Natural killer cell (primary cell): ENCODE measurements at regions of chr1 and their contacts with region 1.

Region 1: DNA sequence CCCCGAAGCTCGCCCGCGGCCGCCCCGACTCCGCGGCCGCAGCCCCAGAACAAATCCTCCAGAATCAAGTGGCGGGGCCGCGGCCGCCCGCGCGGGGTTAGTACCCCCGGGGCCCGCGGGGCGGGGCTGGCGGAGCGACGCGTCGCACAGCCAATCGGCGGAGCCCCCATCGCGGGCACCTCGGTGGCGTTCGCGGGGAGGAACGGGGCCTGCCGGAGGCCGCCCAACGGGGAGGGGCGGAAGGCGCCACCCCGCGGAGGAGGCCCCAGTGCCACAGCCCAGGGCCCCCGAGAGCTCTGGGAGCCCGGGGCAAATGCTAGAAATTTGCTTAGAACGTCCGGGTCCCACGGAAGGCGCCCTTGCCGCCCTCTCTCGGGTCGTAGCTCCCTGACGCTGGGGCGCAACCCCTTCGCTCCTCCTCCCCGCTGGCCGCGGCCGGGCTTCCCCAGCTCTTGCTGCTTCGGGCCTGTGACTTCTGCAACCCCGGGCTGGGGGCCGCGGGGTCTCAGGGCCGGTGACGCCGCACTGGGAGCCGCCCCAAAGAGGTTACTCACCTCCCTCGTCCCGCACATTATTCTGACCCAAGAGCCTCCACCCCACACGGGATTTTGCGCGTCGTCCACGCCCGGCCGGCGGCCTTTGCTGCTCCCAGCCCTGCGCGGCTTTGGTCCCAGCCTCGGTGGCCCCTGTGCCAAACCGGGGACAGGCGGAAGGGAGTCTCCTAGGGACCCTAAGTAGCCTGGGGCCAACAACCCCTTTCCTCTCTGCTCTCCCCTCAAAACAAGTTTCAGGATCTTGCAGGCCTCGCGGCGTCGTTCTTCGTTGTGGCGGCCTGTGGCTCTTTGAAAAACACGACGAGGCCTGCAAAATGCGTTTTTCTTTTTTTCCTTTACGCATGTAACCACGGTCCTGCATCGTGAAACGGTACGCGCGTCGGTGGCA is at the start of gene RUNX3:
- DNase-seq: peak; percentile 94 to 97
- ATAC-seq: peak; percentile 70 to 88 (median 77)
- H3K4me3 ChIP-seq: peak within 1 kb of the TSS; percentile 94
- H3K4me3 Mint-ChIP-seq: peak within 1 kb of the TSS; percentile 97
- H3K27ac ChIP-seq: peak within 1 kb of the TSS; percentile 100
- H3K27ac Mint-ChIP-seq: peak within 1 kb of the TSS; percentile 99
- H3K4me1 ChIP-seq: peaks cover 65% of the 10 kb centered on the region
- H3K4me1 Mint-ChIP-seq: peaks cover 41 to 56% of the 10 kb centered on the region in 2 donors
- H3K27me3 ChIP-seq: no peaks in the 10 kb centered on the region
- H3K27me3 Mint-ChIP-seq: peaks cover 0 to 9% of the 10 kb centered on the region in 2 donors
- CTCF ChIP-seq: no peak
- total RNA-seq, gene RUNX3: 537 to 630 (median 601) TPM

Region 2: GRCh38 chr1:25022361-25023189 is 92.1 kb after region 1 on chr1:
- intact Hi-C with region 1: loop called (anchors 2 kb)
- DNase-seq: peak; percentile 90 to 99
- ATAC-seq: peak; percentile 79 to 94 (median 86)
- H3K4me3 ChIP-seq: peak overlapping the region; percentile 17
- H3K4me3 Mint-ChIP-seq: peak overlapping the region; percentile 85
- H3K27ac ChIP-seq: peak overlapping the region; percentile 100
- H3K27ac Mint-ChIP-seq: peak overlapping the region; percentile 93 to 99
- H3K4me1 ChIP-seq: peaks cover 100% of the 10 kb centered on the region
- H3K4me1 Mint-ChIP-seq: peaks cover 42 to 71% of the 10 kb centered on the region in 2 donors
- H3K27me3 ChIP-seq: no peaks in the 10 kb centered on the region
- H3K27me3 Mint-ChIP-seq: no peaks in the 10 kb centered on the region
- CTCF ChIP-seq: no peak

Region 3: GRCh38 chr1:25037174-25038074 is 106.9 kb after region 1 on chr1:
- intact Hi-C with region 1: loop called (anchors 1 kb)
- DNase-seq: peak in 1 of 2 donors; percentile 83
- ATAC-seq: no peak
- H3K4me3 ChIP-seq: no peak overlapping the region
- H3K4me3 Mint-ChIP-seq: no peak overlapping the region
- H3K27ac ChIP-seq: no peak overlapping the region
- H3K27ac Mint-ChIP-seq: peak overlapping the region in 1 of 2 donors; percentile 25
- H3K4me1 ChIP-seq: peaks cover 81% of the 10 kb centered on the region
- H3K4me1 Mint-ChIP-seq: peaks cover 38 to 45% of the 10 kb centered on the region in 2 donors
- H3K27me3 ChIP-seq: no peaks in the 10 kb centered on the region
- H3K27me3 Mint-ChIP-seq: peaks cover 14 to 17% of the 10 kb centered on the region in 2 donors
- CTCF ChIP-seq: peak; percentile 32

Region 4: GRCh38 chr1:25080294-25081209 is 150.1 kb after region 1 on chr1:
- intact Hi-C with region 1: no loop called
- DNase-seq: no peak
- ATAC-seq: peak in 2 of 3 donors; percentile 67 to 92
- H3K4me3 ChIP-seq: no peak overlapping the region
- H3K4me3 Mint-ChIP-seq: no peak overlapping the region
- H3K27ac ChIP-seq: peak overlapping the region; percentile 3
- H3K27ac Mint-ChIP-seq: peak overlapping the region in 1 of 2 donors; percentile 65
- H3K4me1 ChIP-seq: peaks cover 8% of the 10 kb centered on the region
- H3K4me1 Mint-ChIP-seq: peaks cover 16% of the 10 kb centered on the region in 2 donors
- H3K27me3 ChIP-seq: no peaks in the 10 kb centered on the region
- H3K27me3 Mint-ChIP-seq: peaks cover 31 to 37% of the 10 kb centered on the region in 2 donors
- CTCF ChIP-seq: no peak

Region 5: DNA sequence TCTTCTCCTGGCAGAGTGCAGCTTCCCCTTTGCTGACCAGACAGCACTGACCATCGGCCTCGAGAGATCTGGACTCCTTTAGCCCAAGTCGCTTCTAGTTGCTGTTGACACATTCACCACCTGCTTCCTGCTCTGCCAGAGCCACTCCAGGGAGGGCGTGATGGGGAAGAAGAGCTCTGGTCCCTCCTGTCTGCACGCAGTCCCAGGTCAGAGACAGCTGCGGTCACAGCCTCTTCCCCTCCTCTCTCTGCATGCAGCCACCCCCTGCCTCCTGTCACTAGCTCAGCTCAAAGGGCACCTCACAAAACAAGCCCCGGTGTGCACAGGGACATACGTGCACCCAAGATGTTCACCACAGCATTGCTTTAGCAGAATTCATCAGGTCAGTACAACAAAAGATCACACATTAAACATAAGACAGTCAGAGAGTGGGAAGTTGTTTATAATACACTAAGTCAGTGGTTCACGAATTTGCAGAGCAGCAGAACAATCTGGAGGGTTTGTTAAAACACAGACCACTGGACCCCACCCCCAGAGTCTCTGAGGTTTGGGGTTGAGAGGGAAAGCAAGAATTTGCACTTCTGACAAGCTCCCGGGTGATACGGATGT is 169.0 kb after region 1 on chr1:
- intact Hi-C with region 1: loop called (anchors 2 kb)
- DNase-seq: peak; percentile 64 to 71
- ATAC-seq: peak; percentile 60 to 77 (median 74)
- H3K4me3 ChIP-seq: peak overlapping the region; percentile 2
- H3K4me3 Mint-ChIP-seq: peak overlapping the region; percentile 78
- H3K27ac ChIP-seq: peak overlapping the region; percentile 54
- H3K27ac Mint-ChIP-seq: peak overlapping the region; percentile 75 to 84
- H3K4me1 ChIP-seq: peaks cover 77% of the 10 kb centered on the region
- H3K4me1 Mint-ChIP-seq: peaks cover 65 to 74% of the 10 kb centered on the region in 2 donors
- H3K27me3 ChIP-seq: no peaks in the 10 kb centered on the region
- H3K27me3 Mint-ChIP-seq: peaks cover 30 to 44% of the 10 kb centered on the region in 2 donors
- CTCF ChIP-seq: no peak

Region 6: DNA sequence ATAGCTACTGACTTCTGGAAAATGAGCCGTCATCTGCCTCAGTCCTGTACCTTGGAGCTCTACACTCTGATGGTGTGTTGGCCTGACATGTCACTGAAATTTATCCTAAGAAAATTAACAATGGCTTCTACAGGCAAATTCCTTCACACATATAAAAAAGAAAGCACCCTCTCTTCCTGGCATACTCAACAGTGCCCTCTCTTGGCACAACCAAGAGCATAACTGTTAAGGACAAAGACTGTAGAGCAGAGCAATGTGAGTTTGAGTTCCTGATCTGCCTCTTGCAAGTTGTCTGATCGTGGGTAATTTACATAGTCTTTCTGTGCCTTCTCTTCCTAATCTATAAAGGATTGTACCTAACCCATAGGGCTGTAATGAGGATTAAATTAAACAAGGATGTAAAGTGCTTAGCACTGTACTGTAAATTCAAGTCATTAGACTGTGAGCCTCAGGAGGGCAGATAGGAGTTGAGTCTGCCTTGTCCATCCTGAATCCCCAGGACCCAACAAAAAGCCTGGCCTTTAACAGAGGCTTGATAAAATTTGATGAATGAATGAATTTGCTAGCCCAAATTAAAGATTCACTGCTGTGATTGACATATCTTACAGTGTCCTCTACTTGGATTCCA is 218.3 kb after region 1 on chr1:
- intact Hi-C with region 1: loop called (anchors 5 kb)
- DNase-seq: peak in 1 of 2 donors; percentile 75
- ATAC-seq: peak; percentile 64 to 91 (median 83)
- H3K4me3 ChIP-seq: no peak overlapping the region
- H3K4me3 Mint-ChIP-seq: no peak overlapping the region
- H3K27ac ChIP-seq: no peak overlapping the region
- H3K27ac Mint-ChIP-seq: no peak overlapping the region
- H3K4me1 ChIP-seq: peaks cover 5% of the 10 kb centered on the region
- H3K4me1 Mint-ChIP-seq: peaks cover 8 to 17% of the 10 kb centered on the region in 2 donors
- H3K27me3 ChIP-seq: peaks cover 5% of the 10 kb centered on the region
- H3K27me3 Mint-ChIP-seq: peaks cover 21 to 44% of the 10 kb centered on the region in 2 donors
- CTCF ChIP-seq: peak; percentile 67

Region 7: GRCh38 chr1:25204797-25205480 is 274.5 kb after region 1 on chr1:
- intact Hi-C with region 1: loop called (anchors 1 kb)
- DNase-seq: peak in 1 of 2 donors; percentile 75
- ATAC-seq: peak; percentile 73 to 87 (median 86)
- H3K4me3 ChIP-seq: no peak overlapping the region
- H3K4me3 Mint-ChIP-seq: no peak overlapping the region
- H3K27ac ChIP-seq: no peak overlapping the region
- H3K27ac Mint-ChIP-seq: no peak overlapping the region
- H3K4me1 ChIP-seq: no peaks in the 10 kb centered on the region
- H3K4me1 Mint-ChIP-seq: no peaks in the 10 kb centered on the region
- H3K27me3 ChIP-seq: no peaks in the 10 kb centered on the region
- H3K27me3 Mint-ChIP-seq: peaks cover 3 to 13% of the 10 kb centered on the region in 2 donors
- CTCF ChIP-seq: peak; percentile 83